Aorta (tissue), 5 donors: ENCODE measurements at regions of chr12 and their contacts with region 1.

Region 1: DNA sequence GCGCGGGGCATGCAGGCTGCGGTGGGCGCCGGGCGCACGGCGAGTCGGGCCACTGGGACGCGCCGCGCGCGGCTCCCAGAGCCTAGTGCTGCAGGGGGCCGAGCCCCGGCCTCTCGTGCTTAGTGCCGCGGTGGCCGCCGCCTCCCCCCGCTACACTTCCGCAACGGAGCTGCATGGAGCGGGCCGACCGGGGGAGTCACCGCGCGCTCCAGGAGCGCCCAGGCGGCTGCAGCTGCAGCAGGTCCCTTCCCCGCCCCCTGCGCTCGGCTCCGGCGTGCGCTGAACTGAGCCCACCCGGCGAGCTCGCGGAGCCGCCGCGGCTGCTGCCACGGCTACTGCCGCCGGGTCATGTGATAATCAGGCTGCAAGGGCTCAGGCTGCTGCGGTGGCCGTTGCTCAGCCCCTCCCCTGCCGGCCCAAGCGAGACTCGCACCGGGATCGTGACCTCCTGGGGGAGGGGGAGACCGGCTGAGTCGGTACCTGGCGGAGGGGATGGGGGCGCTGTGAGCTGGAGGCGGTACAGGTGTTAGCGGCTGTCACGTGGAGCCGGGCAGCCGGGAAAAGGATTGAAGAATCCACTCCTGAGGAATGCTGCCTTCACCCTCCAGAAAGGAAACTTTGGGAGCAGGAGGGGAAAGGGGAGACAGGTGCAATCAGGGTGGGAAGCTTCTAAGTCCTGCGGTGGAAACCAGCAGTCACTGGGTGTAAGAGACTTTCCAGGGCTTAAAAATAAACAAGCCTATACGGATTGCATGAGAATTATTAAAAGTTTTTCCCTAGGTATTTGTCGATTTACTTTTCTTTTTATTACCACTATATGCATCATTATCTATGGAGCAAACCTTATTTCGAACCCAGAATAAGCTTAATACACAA is at the start of gene PPM1H:
- DNase-seq: peak; percentile 76 to 87
- ATAC-seq: peak; percentile 76
- H3K4me3 ChIP-seq: peak within 1 kb of the TSS; percentile 56 to 70
- H3K27ac ChIP-seq: peak within 1 kb of the TSS; percentile 4 to 50
- H3K4me1 ChIP-seq: no peaks in the 10 kb centered on the region
- H3K27me3 ChIP-seq: no peaks in the 10 kb centered on the region
- total RNA-seq, gene PPM1H: 5.0 to 9.3 TPM

Region 2: GRCh38 chr12:62813031-62813829 is 121.8 kb before region 1 on chr12:
- intact Hi-C with region 1: loop called (anchors 2 to 10 kb)
- DNase-seq: peak; percentile 79 to 91
- ATAC-seq: peak; percentile 78
- H3K4me3 ChIP-seq: no peak overlapping the region
- H3K27ac ChIP-seq: no peak overlapping the region
- H3K4me1 ChIP-seq: peaks cover 0 to 4% of the 10 kb centered on the region in 2 donors
- H3K27me3 ChIP-seq: no peaks in the 10 kb centered on the region

Region 3: GRCh38 chr12:62866451-62867082 is 68.5 kb before region 1 on chr12:
- intact Hi-C with region 1: loop called (anchors 5 to 10 kb)
- DNase-seq: no peak
- ATAC-seq: peak; percentile 39
- H3K4me3 ChIP-seq: no peak overlapping the region
- H3K27ac ChIP-seq: peak overlapping the region; percentile 87 to 93
- H3K4me1 ChIP-seq: peaks cover 11 to 20% of the 10 kb centered on the region in 2 donors
- H3K27me3 ChIP-seq: no peaks in the 10 kb centered on the region

Region 4: GRCh38 chr12:63045020-63045860 is 110.2 kb after region 1 on chr12:
- intact Hi-C with region 1: loop called (anchors 1 to 10 kb)
- DNase-seq: peak in 1 of 2 donors; percentile 59
- ATAC-seq: peak; percentile 74
- H3K4me3 ChIP-seq: no peak overlapping the region
- H3K27ac ChIP-seq: peak overlapping the region; percentile 92 to 93
- H3K4me1 ChIP-seq: peaks cover 4 to 8% of the 10 kb centered on the region in 2 donors
- H3K27me3 ChIP-seq: no peaks in the 10 kb centered on the region